Prostate gland (tissue), 2 donors: ENCODE measurements at regions of chr4 and their contacts with region 1.

Region 1: GRCh38 chr4:156594624-156595023 is 377.0 kb downstream of the PDGFC start:
- DNase-seq: peak; percentile 17
- H3K4me3 ChIP-seq: no peak overlapping the region
- H3K27ac ChIP-seq: no peak overlapping the region
- H3K4me1 ChIP-seq: peaks cover 7% of the 10 kb centered on the region
- H3K27me3 ChIP-seq: no peaks in the 10 kb centered on the region
- CTCF ChIP-seq: no peak
- POLR2A ChIP-seq: no peak

Region 2: DNA sequence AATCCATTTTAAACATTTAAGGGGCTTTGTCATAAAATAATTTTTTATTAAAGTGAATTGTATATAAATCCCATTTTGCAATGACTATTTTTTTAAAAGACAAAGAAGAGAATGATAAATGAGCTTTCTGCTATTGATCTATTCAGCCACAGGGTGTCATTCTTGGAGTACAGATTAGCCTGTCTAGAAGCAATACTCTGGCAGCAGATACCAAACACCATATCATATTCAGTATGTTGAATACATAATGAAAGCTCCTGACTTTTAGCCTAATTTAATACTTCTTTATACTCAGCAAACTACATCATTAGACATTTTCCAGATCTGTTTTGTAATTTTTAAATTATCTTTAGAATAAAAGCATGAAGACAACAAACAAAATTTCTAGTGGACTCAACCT is 119.3 kb before region 1 on chr4:
- intact Hi-C with region 1: no loop called
- DNase-seq: peak; percentile 8
- H3K4me3 ChIP-seq: no peak overlapping the region
- H3K27ac ChIP-seq: no peak overlapping the region
- H3K4me1 ChIP-seq: no peaks in the 10 kb centered on the region
- H3K27me3 ChIP-seq: no peaks in the 10 kb centered on the region
- CTCF ChIP-seq: peak in 3 of 4 experiments; percentile 40 to 74 (median 73)
- POLR2A ChIP-seq: no peak

Region 3: GRCh38 chr4:157128395-157128794 is 533.8 kb after region 1 on chr4:
- intact Hi-C with region 1: loop called (anchors 5 kb)
- DNase-seq: no peak
- H3K4me3 ChIP-seq: no peak overlapping the region
- H3K27ac ChIP-seq: no peak overlapping the region
- H3K4me1 ChIP-seq: no peaks in the 10 kb centered on the region
- H3K27me3 ChIP-seq: no peaks in the 10 kb centered on the region
- CTCF ChIP-seq: peak in 1 of 4 experiments; percentile 42
- POLR2A ChIP-seq: no peak